ENCODE measurements at regions of chr10 and their contacts with region 1.

Region 1: DNA sequence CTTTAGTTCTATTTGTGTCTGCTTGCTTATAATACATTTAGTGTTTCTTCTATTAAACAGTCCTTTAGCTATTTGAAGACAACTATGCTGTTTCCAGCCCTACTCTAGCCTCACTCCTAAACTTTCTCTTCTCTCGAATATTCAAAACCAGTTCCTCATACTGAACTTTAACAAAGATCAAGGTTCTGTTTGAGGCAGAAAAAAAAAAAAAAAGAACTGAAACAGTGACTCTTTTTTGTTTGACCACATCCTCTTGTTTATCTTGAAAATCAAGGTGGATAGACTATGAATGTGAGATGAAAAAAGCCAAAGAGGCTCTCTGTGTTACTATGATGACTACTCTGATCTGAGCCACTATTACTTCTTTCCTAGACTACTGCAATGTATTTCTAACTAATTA is 154.3 kb downstream of the ZNF365 start:
- DNase-seq: no peak
- ATAC-seq: no peak
- H3K4me3 ChIP-seq: no peak overlapping the region
- H3K27ac ChIP-seq: no peak overlapping the region
- H3K4me1 ChIP-seq: no peaks in the 10 kb centered on the region
- H3K27me3 ChIP-seq: no peaks in the 10 kb centered on the region
- CTCF ChIP-seq: no peak

Region 2: GRCh38 chr10:60845038-60845437 is 1683.4 kb before region 1 on chr10:
- CTCF ChIA-PET with region 1: no interaction called
- POLR2A ChIA-PET with region 1: interaction called, 21 read pairs
- in situ Hi-C with region 1: no loop called
- intact Hi-C with region 1: no loop called
- DNase-seq: no peak
- ATAC-seq: no peak
- H3K4me3 ChIP-seq: no peak overlapping the region
- H3K27ac ChIP-seq: no peak overlapping the region
- H3K4me1 ChIP-seq: no peaks in the 10 kb centered on the region
- H3K27me3 ChIP-seq: no peaks in the 10 kb centered on the region; the same call in none of the 2 replicates
- CTCF ChIP-seq: no peak

Region 3: GRCh38 chr10:62459072-62459471 is 69.4 kb before region 1 on chr10:
- CTCF ChIA-PET with region 1: no interaction called
- POLR2A ChIA-PET with region 1: no interaction called
- in situ Hi-C with region 1: no loop called
- intact Hi-C with region 1: no loop called
- DNase-seq: no peak
- ATAC-seq: no peak
- H3K4me3 ChIP-seq: no peak overlapping the region
- H3K27ac ChIP-seq: no peak overlapping the region
- H3K4me1 ChIP-seq: 0 out of 2 replicates have a peak, but pooled peaks cover 8% of the 10 kb centered on the region
- H3K27me3 ChIP-seq: no peaks in the 10 kb centered on the region
- CTCF ChIP-seq: no peak

Region 4: GRCh38 chr10:62804356-62805230 is 276.2 kb after region 1 on chr10 and contains the start of gene ADO:
- CTCF ChIA-PET with region 1: no interaction called
- POLR2A ChIA-PET with region 1: interaction called, 10 read pairs
- in situ Hi-C with region 1: no loop called
- intact Hi-C with region 1: no loop called
- DNase-seq: peak; percentile 71
- ATAC-seq: peak; percentile 98
- H3K4me3 ChIP-seq: peak within 1 kb of the TSS; percentile 80 to 81
- H3K27ac ChIP-seq: peak within 1 kb of the TSS; percentile 92
- H3K4me1 ChIP-seq: peaks cover 13% of the 10 kb centered on the region
- H3K27me3 ChIP-seq: peaks cover 4% of the 10 kb centered on the region; the same call in 1 of the 2 replicates
- CTCF ChIP-seq: no peak
- total RNA-seq, gene ADO: 24.9 TPM